Pancreas (tissue), 10 donors: ENCODE measurements at regions of chr19 and their contacts with region 1.

Region 1: GRCh38 chr19:23321948-23322549 is 71.9 kb upstream of the ZNF724 start:
- DNase-seq: no peak
- ATAC-seq: no peak
- H3K4me3 ChIP-seq: no peak overlapping the region
- H3K27ac ChIP-seq: no peak overlapping the region
- H3K4me1 ChIP-seq: no peaks in the 10 kb centered on the region
- H3K27me3 ChIP-seq: no peaks in the 10 kb centered on the region
- CTCF ChIP-seq: no peak

Region 2: GRCh38 chr19:23470873-23471545 is 149.0 kb after region 1 on chr19:
- intact Hi-C with region 1: loop called (anchors 2 to 5 kb)
- DNase-seq: peak in 1 of 6 donors; percentile 41
- ATAC-seq: no peak
- H3K4me3 ChIP-seq: no peak overlapping the region
- H3K27ac ChIP-seq: no peak overlapping the region
- H3K4me1 ChIP-seq: no peaks in the 10 kb centered on the region
- H3K27me3 ChIP-seq: peaks cover 0 to 6% (median 0%) of the 10 kb centered on the region in 4 donors
- CTCF ChIP-seq: no peak